ENCODE measurements at regions of chr14 and their contacts with region 1.

Region 1: DNA sequence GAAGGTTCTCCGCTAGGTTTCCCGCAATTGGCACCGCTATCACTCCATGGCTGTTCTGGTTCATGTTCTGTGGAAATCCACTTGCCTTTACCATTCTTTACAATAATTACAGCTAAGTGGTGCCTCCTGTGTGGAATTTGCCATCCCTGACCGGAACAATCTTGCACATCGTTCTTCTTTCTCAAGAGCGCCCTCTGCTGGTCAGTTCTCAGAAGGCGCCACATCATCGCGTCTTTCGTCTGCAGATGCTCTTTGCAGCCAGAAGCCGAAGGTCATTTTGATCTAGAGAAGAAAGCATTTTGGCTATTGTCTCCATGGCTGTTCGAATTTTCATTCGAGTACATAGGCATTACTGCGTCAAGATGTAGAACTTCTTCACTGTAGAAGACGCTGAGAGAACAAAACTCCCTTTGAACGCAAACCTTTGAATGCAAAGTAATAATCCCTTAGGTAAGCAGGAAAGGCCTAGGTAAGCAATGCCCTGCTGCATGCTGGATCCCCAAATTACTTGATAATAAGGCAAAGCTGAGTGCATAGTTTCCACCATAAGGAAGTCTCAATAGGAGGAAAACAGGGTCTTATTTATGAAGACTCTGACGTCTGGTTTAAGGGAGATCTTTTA is 10.1 kb upstream of the RTRAF start:
- DNase-seq: peak; percentile 79
- H3K4me3 ChIP-seq: no peak overlapping the region
- H3K27ac ChIP-seq: no peak overlapping the region
- H3K4me1 ChIP-seq: no peaks in the 10 kb centered on the region
- H3K27me3 ChIP-seq: no peaks in the 10 kb centered on the region

Region 2: DNA sequence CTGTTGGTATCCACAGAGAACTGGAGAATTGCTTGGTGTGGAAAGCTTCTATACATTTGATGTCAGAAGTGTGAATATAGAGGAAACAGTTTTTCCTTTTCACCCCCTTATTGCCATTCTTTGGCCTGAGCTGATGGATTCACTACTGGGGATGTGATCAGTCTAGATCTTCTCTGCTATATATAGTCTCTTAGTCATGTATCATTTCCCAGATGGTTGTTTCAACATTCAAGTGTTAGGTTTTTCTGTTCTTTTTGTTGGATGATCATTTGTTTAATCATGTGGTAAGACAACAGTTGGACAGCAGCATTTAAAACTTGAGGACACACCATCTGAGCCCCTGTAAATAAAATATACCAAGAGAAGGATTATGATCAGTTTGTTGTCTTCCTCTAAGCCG is 709.6 kb before region 1 on chr14:
- in situ Hi-C with region 1: loop called (anchors 10 kb)
- DNase-seq: no peak
- H3K4me3 ChIP-seq: no peak overlapping the region
- H3K27ac ChIP-seq: no peak overlapping the region
- H3K4me1 ChIP-seq: no peaks in the 10 kb centered on the region
- H3K27me3 ChIP-seq: no peaks in the 10 kb centered on the region

Region 3: GRCh38 chr14:51780006-51780692 is 199.1 kb before region 1 on chr14:
- in situ Hi-C with region 1: loop called (anchors 10 kb)
- DNase-seq: peak; percentile 72
- H3K4me3 ChIP-seq: peak overlapping the region; percentile 53
- H3K27ac ChIP-seq: no peak overlapping the region
- H3K4me1 ChIP-seq: peaks cover 19% of the 10 kb centered on the region
- H3K27me3 ChIP-seq: no peaks in the 10 kb centered on the region